Left colon (tissue), 2 donors: ENCODE measurements at regions of chr15 and their contacts with region 1.

Region 1: GRCh38 chr15:92992720-92993119 is 92.6 kb downstream of the CHD2 start:
- DNase-seq: no peak
- ATAC-seq: no peak

Region 2: DNA sequence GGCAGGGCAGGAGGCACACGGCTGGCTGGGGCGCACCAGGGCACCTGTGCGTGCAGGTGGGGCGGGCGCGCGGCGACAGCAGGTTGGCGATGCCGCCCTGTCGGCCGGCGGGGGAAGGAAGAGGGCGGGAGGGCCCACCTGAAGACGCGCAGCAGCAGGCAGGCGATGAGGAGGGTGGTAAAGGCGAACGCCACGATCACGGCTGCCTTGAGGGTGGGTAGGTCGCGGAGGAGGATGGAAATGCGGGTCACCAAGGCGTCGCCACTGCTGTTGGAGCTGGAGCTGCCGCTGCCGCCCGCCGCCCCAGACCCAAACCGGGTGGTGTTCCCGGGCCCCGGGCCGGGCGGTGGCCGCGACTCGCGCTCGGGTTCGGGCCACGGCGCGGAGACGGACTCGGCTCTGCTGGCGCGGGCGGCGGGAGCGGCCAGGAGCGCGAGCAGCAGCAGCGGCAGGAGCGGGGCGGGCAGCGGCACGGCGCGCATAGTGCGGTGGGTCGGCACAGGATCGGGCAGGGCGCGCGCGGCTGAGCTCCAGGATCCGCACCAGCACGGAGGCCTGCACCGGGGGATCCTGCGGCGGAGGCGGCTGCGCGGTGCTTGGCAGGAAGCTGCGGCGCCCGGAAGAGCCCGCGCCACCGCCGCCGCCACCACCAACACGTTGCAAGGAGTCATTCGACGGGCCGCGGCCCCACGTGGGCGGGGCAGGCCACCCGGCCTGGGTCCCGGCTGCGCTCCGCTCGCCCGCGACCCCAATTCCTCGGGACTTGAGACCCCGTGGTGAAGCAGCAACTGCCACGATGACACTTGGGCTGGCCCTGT is 337.3 kb before region 1 on chr15 and contains the start of gene FAM174B:
- intact Hi-C with region 1: no loop called
- DNase-seq: peak; percentile 52 to 66
- ATAC-seq: peak; percentile 80
- total RNA-seq, gene FAM174B: 29.5 to 32.4 TPM

Region 3: GRCh38 chr15:92930776-92931175 is 61.9 kb before region 1 on chr15:
- intact Hi-C with region 1: loop called in 1 of 2 experiments (anchors 10 kb)
- DNase-seq: no peak
- ATAC-seq: no peak